ENCODE measurements at regions of chr18 and their contacts with region 1.

Region 1: DNA sequence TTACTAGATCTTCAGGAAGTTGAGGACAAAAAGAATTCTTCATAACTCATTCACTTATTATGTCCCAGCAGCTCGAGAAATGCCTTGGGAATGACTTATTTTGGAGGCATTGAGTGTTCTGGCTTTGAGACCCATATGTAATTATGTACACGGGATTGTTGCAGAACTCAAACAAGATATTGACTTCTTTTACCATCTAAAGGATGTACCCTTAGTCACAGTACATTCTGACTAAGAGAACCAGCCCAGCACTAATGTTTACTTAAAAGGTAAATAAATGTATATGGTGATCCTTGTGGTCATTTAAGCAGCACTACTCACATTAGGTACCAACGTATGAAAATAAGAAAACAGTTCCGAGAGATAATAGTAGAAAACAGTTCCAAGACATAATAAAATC is 268.9 kb downstream of the ADCYAP1 start:
- DNase-seq: no peak
- H3K4me3 ChIP-seq: no peak overlapping the region
- H3K27ac ChIP-seq: no peak overlapping the region
- H3K4me1 ChIP-seq: no peaks in the 10 kb centered on the region
- H3K27me3 ChIP-seq: no peaks in the 10 kb centered on the region
- CTCF ChIP-seq: no peak
- EP300 ChIP-seq: no peak
- POLR2A ChIP-seq: no peak

Region 2: DNA sequence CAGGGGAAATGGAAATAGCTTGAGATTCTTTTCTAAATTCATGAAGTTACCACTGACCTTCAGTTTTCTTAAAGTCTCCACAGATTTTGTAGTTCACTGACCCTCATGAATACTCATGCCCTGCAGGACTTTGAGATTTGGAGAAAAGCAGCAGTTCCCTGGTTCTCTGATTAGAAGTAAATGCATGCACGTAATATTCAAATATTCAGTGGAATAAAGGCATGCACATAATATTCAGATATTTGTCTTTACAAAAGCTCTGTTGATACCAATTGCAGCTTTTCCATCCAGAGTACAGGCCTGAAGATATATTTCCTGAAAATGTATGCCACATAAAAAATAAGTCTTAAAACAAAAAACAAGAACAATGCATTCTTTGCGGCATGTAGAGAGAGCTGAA is 49.1 kb before region 1 on chr18:
- in situ Hi-C with region 1: no loop called
- intact Hi-C with region 1: loop called (anchors 1 kb)
- DNase-seq: no peak
- H3K4me3 ChIP-seq: no peak overlapping the region
- H3K27ac ChIP-seq: no peak overlapping the region
- H3K4me1 ChIP-seq: no peaks in the 10 kb centered on the region
- H3K27me3 ChIP-seq: no peaks in the 10 kb centered on the region
- CTCF ChIP-seq: no peak
- EP300 ChIP-seq: no peak
- POLR2A ChIP-seq: no peak

Region 3: DNA sequence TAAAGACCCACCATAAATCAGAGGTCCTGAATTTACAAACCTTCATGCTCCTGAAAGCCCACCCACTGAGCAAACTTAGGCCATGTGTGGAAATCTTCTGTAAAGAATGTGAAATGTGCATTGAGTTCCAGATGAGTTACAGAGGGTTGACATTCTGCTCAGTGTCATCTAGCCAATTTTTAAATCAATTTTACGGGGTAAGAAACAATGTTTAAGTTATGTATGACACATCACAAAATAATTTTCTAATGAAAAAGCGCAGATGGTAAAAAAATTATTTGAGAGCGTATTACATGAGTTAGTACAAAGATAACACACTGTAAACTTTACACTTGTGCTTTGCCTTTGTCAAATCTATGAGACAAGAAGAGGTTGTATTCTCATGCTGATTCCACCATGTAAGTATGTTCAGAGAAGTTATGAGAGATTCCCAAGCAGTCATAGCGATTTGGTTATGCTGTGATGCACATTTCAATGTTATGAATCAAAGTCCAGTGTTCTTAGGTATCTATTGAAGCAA is 177.4 kb after region 1 on chr18:
- in situ Hi-C with region 1: no loop called
- intact Hi-C with region 1: no loop called
- DNase-seq: no peak
- H3K4me3 ChIP-seq: no peak overlapping the region
- H3K27ac ChIP-seq: no peak overlapping the region
- H3K4me1 ChIP-seq: no peaks in the 10 kb centered on the region
- H3K27me3 ChIP-seq: no peaks in the 10 kb centered on the region
- CTCF ChIP-seq: no peak
- EP300 ChIP-seq: no peak
- POLR2A ChIP-seq: no peak

Measured in transverse colon (tissue), 4 donors.